ENCODE measurements at regions of chr6 and their contacts with region 1.

Region 1: GRCh38 chr6:81752138-81752920 is at the start of gene TENT5A:
- DNase-seq: peak; percentile 96 to 97
- ATAC-seq: peak; percentile 94
- H3K4me3 ChIP-seq: peak within 1 kb of the TSS; percentile 84 to 100
- H3K27ac ChIP-seq: peak within 1 kb of the TSS; percentile 71 to 99
- H3K4me1 ChIP-seq: peaks cover 0 to 2% of the 10 kb centered on the region in 2 donors
- H3K27me3 ChIP-seq: no peaks in the 10 kb centered on the region
- total RNA-seq, gene TENT5A: 25.5 to 26.9 TPM

Region 2: GRCh38 chr6:80605165-80605989 is 1147.0 kb before region 1 on chr6:
- intact Hi-C with region 1: loop called (anchors 5 to 10 kb)
- DNase-seq: no peak
- ATAC-seq: no peak
- H3K4me3 ChIP-seq: no peak overlapping the region
- H3K27ac ChIP-seq: no peak overlapping the region
- H3K4me1 ChIP-seq: peaks cover 2 to 4% of the 10 kb centered on the region in 2 donors
- H3K27me3 ChIP-seq: no peaks in the 10 kb centered on the region

Region 3: DNA sequence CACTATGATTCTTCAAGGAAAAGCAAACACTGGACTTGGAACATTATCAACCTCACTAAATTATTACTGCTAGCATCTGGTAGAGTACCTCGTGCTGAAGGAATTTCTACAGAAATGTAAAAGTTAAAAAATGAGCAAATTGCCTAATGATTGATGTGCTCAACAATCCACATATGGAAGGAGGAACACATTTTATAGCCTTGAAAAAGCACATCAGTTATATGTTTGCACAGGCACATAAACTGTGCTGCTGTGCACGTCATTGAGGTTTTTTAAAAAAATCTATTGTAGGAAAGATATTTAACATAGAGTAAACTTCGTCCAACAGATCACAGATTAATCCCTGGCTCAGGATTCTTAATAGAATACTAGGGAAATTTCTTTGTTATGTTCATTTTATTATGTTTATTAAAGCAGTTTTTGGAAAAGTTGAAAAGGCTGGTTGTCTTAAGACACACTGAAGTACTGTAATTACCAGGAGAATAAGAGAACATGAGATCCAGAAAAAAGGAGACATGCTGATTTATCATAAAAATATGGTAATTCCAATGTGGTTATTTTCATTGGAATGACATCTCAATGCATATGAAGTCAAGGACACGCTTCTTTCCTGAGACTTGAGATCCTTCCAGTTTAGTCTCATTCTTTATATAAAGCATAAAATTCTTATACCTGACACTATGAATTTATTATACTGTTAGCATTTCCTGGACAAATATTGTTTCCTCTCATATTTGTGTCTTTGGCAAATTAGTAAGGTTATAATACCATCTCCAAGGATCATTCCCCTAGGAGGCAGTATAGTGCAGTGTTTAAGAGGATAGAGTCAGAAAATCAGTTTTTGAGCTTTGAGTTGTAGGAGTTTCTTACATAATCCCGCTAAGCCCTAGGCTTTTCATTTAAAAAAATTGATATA is 510.9 kb before region 1 on chr6:
- intact Hi-C with region 1: loop called (anchors 5 kb)
- DNase-seq: no peak
- ATAC-seq: no peak
- H3K4me3 ChIP-seq: no peak overlapping the region
- H3K27ac ChIP-seq: no peak overlapping the region
- H3K4me1 ChIP-seq: no peaks in the 10 kb centered on the region
- H3K27me3 ChIP-seq: no peaks in the 10 kb centered on the region

Region 4: GRCh38 chr6:81859884-81860283 is 107.6 kb after region 1 on chr6:
- intact Hi-C with region 1: loop called in 1 of 2 experiments (anchors 5 kb)
- DNase-seq: peak; percentile 70 to 83
- ATAC-seq: peak; percentile 73
- H3K4me3 ChIP-seq: no peak overlapping the region
- H3K27ac ChIP-seq: peak overlapping the region in 1 of 2 donors; percentile 37
- H3K4me1 ChIP-seq: peaks cover 8 to 22% of the 10 kb centered on the region in 2 donors
- H3K27me3 ChIP-seq: no peaks in the 10 kb centered on the region

Region 5: DNA sequence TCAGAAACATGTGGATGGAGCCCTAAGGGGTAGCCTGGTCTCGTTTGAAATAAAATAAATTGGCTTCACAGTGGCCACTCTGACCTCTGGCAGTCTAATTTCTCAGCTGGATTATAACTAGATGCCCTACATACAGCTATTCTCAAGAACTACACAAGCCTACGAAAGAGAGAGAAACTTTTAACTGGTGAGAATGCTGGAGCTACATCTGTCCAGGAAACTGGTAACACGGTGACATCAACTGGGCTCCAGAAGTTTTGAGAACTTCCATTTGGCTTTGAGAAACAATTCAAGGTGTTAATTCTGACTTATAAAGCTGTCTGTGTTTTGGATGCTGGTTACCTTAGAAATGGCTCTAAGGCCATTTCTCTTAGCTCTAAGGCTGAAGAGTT is 187.4 kb after region 1 on chr6:
- intact Hi-C with region 1: loop called in 1 of 2 experiments (anchors 5 kb)
- DNase-seq: no peak
- ATAC-seq: no peak
- H3K4me3 ChIP-seq: no peak overlapping the region
- H3K27ac ChIP-seq: no peak overlapping the region
- H3K4me1 ChIP-seq: peaks cover 4 to 9% of the 10 kb centered on the region in 2 donors
- H3K27me3 ChIP-seq: no peaks in the 10 kb centered on the region

Region 6: GRCh38 chr6:82017288-82017687 is 265.0 kb after region 1 on chr6:
- intact Hi-C with region 1: loop called in 1 of 2 experiments (anchors 10 kb)
- DNase-seq: peak in 1 of 2 donors; percentile 57
- ATAC-seq: peak; percentile 87
- H3K4me3 ChIP-seq: peak overlapping the region in 1 of 2 donors; percentile 18
- H3K27ac ChIP-seq: peak overlapping the region; percentile 52 to 94
- H3K4me1 ChIP-seq: peaks cover 18 to 21% of the 10 kb centered on the region in 2 donors
- H3K27me3 ChIP-seq: no peaks in the 10 kb centered on the region

Measured in aorta (tissue), 5 donors.